GM18951 (cell line): ENCODE measurements at regions of chr6 and their contacts with region 1.

Region 1: GRCh38 chr6:52016915-52017748 is 70.3 kb downstream of the PKHD1 start:
- POLR2A ChIP-seq: no peak

Region 2: GRCh38 chr6:51855310-51856082 is 161.6 kb before region 1 on chr6:
- in situ Hi-C with region 1: loop called (anchors 10 kb)
- POLR2A ChIP-seq: no peak

Region 3: GRCh38 chr6:51959744-51960383 is 57.3 kb before region 1 on chr6:
- in situ Hi-C with region 1: no loop called
- POLR2A ChIP-seq: no peak